ENCODE measurements at regions of chr17 and their contacts with region 1.

Region 1: DNA sequence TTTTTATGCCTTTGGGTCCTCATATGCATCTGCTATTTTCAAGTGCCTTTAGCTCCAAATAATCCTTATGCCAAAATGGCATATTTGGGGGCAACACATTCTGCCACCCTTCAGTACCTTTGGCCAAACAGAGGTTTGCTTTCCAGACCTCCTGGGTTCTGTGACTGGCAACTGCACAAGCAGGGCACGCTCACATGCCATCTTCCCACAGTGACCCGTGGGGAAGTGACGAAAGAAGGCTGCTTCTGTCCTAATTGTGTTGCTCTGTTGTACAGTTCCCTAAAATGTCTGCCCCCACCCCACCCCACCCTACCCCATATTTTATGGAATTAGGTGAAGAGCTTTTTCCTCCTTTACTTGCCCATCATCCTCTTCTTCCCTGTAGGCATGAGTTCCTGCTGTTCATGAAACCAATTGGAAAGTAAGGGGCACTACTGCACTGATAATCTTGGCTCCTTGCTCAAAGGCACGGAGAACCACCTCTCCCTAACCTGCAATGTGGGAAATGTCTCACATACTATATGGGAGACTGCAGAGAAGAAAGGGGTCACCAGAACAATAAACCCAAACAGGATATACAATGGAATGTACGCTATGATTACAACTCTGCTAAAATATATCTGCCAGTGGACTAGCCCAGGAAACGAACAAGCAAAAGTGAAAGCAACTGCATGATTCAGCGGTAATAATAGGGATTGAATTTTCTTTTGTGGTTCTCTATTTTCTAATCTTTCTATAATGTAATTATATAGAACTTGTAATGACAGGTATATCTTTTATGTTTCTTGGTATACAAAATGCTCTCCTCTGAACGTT is 3.3 kb upstream of the SLFN12L start:
- DNase-seq: peak; percentile 27
- H3K4me3 ChIP-seq: peak overlapping the region; percentile 64
- H3K27ac ChIP-seq: peak overlapping the region; percentile 25
- H3K4me1 ChIP-seq: peaks cover 19% of the 10 kb centered on the region
- CTCF ChIP-seq: no peak

Region 2: GRCh38 chr17:35170968-35171771 is 369.6 kb before region 1 on chr17:
- CTCF ChIA-PET with region 1: no interaction called
- POLR2A ChIA-PET with region 1: no interaction called
- intact Hi-C with region 1: loop called (anchors 10 kb)
- DNase-seq: peak; percentile 4
- H3K4me3 ChIP-seq: no peak overlapping the region
- H3K27ac ChIP-seq: no peak overlapping the region
- H3K4me1 ChIP-seq: no peaks in the 10 kb centered on the region
- CTCF ChIP-seq: peak; percentile 44

Region 3: GRCh38 chr17:35312790-35313711 is 227.7 kb before region 1 on chr17:
- CTCF ChIA-PET with region 1: no interaction called
- POLR2A ChIA-PET with region 1: no interaction called
- intact Hi-C with region 1: loop called (anchors 2 kb)
- DNase-seq: peak; percentile 66
- H3K4me3 ChIP-seq: no peak overlapping the region
- H3K27ac ChIP-seq: no peak overlapping the region
- H3K4me1 ChIP-seq: no peaks in the 10 kb centered on the region
- CTCF ChIP-seq: peak; percentile 90

Region 4: GRCh38 chr17:35390663-35391062 is 150.1 kb before region 1 on chr17:
- CTCF ChIA-PET with region 1: no interaction called
- POLR2A ChIA-PET with region 1: no interaction called
- intact Hi-C with region 1: no loop called
- DNase-seq: no peak
- H3K4me3 ChIP-seq: no peak overlapping the region
- H3K27ac ChIP-seq: no peak overlapping the region
- H3K4me1 ChIP-seq: no peaks in the 10 kb centered on the region
- CTCF ChIP-seq: no peak

Region 5: GRCh38 chr17:35630530-35631148 is 89.8 kb after region 1 on chr17:
- CTCF ChIA-PET with region 1: no interaction called
- POLR2A ChIA-PET with region 1: no interaction called
- intact Hi-C with region 1: no loop called
- DNase-seq: no peak
- H3K4me3 ChIP-seq: no peak overlapping the region
- H3K27ac ChIP-seq: no peak overlapping the region
- H3K4me1 ChIP-seq: peaks cover 7% of the 10 kb centered on the region
- CTCF ChIP-seq: no peak